Breast epithelium (tissue), 4 donors: ENCODE measurements at regions of chr10 and their contacts with region 1.

Region 1: GRCh38 chr10:45091968-45092367 is 91.2 kb downstream of the ZNF22 start:
- DNase-seq: no peak
- H3K4me3 ChIP-seq: no peak overlapping the region
- H3K27ac ChIP-seq: no peak overlapping the region
- H3K4me1 ChIP-seq: no peaks in the 10 kb centered on the region
- H3K27me3 ChIP-seq: no peaks in the 10 kb centered on the region
- CTCF ChIP-seq: no peak
- POLR2A ChIP-seq: no peak

Region 2: DNA sequence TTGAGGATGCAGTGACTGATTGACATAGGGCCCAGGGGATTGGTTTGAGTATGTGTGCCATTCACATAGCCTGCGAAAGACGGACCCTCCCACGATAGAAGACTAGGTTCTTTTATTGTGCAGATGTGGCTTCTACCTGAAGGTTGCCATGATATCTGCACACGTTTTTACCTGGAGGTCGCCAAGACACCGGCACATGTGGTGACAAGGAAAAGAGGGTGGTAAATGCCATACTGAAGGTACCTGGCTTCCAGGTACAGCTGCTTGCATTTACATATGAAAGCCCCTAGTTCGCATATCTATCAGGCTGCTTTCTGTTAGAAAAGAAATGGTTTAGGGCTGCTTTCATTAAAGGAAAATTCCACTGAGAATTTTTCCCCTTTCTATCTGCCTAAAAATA is 47.7 kb before region 1 on chr10:
- intact Hi-C with region 1: no loop called
- DNase-seq: no peak
- H3K4me3 ChIP-seq: no peak overlapping the region
- H3K27ac ChIP-seq: no peak overlapping the region
- H3K4me1 ChIP-seq: no peaks in the 10 kb centered on the region
- H3K27me3 ChIP-seq: no peaks in the 10 kb centered on the region
- CTCF ChIP-seq: no peak
- POLR2A ChIP-seq: no peak

Region 3: DNA sequence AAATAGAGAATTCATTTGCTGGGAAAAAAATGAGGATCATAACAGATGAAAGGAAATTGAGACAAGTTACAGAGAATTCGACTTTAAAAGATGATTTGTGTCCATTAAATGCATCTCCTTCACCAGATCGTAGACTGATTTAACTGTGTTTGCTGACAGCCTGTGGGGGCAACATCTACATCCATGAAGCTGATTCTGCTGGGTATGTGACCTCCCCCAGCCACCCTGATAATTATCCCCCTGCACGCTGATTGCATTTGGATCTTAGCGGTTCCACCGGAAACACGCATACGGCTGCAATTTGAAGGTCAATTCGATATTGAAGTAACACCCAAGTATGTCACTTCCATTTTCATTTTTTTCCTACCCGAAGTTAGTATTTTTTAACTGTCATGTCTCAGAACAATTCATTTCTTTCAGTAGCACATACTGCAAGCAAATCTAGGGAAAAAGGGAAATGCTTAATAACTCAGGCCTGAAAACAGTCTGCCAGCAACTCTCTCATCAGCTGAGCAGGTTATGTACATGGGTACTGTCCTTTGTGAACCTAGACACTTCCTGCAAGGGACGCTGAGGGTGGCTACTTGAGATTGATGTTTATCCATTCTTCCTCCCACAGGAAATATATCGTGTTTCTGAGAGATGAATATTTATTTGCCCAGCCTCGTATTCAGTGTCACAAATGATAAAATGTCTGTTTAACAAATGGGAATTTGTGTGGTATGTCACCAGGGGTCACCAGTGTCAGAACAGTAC is 43.7 kb after region 1 on chr10:
- intact Hi-C with region 1: loop called (anchors 2 kb)
- DNase-seq: no peak
- H3K4me3 ChIP-seq: no peak overlapping the region
- H3K27ac ChIP-seq: no peak overlapping the region
- H3K4me1 ChIP-seq: no peaks in the 10 kb centered on the region
- H3K27me3 ChIP-seq: no peaks in the 10 kb centered on the region
- CTCF ChIP-seq: no peak
- POLR2A ChIP-seq: no peak